GM12878 (cell line): ENCODE measurements at regions of chr1 and their contacts with region 1.

Region 1: DNA sequence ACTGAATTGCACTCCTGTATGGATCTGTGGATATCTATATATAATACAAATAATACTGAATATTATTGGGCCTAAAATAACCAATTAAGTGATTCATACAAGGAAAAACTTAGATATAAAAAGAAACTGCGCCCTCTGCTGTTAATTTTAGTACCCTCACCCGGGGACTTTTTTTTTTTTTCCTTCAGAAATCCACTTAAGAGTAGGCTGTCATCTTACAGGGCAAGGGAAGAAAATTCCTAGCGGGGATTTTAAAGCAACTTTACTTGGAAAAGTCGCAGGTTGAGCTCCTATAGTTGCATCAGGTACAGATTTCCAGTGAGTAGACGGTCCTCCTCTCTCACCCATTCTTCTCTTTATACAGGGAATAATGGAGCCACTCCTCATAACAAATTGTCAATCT is 1.3 kb downstream of the NTNG1 start:
- DNase-seq: no peak
- ATAC-seq: peak; percentile 47
- H3K4me3 ChIP-seq: peak overlapping the region; percentile 55; the same call in 1 of the 2 replicates
- H3K27ac ChIP-seq: no peak overlapping the region
- H3K4me1 ChIP-seq: no peaks in the 10 kb centered on the region
- H3K27me3 ChIP-seq: peaks cover 3 to 6% of the 10 kb centered on the region in 2 experiments; a peak in 3 of 4 replicates
- CTCF ChIP-seq: peak; percentile 45 to 50 (median 49); a peak in 5 of 6 replicates
- EP300 ChIP-seq: no peak
- POLR2A ChIP-seq: no peak
- RAD21 ChIP-seq: peak; percentile 62

Region 2: GRCh38 chr1:106022312-106022902 is 1119.7 kb before region 1 on chr1:
- CTCF ChIA-PET with region 1: no interaction called
- POLR2A ChIA-PET with region 1: no interaction called
- RAD21 ChIA-PET with region 1: no interaction called
- SMC1A ChIA-PET with region 1: no interaction called
- in situ Hi-C with region 1: loop called (anchors 5 kb)
- intact Hi-C with region 1: no loop called
- DNase-seq: no peak
- ATAC-seq: 0 out of 3 replicates have a peak, but pooled peaks have one; percentile 30
- H3K4me3 ChIP-seq: no peak overlapping the region
- H3K27ac ChIP-seq: no peak overlapping the region
- H3K4me1 ChIP-seq: no peaks in the 10 kb centered on the region
- H3K27me3 ChIP-seq: no peaks in the 10 kb centered on the region
- CTCF ChIP-seq: peak in 1 of 3 experiments; percentile 16; a peak in 2 of 6 replicates
- EP300 ChIP-seq: no peak
- POLR2A ChIP-seq: no peak
- RAD21 ChIP-seq: 0 out of 2 replicates have a peak, but pooled peaks have one; percentile 13

Region 3: GRCh38 chr1:106957783-106958182 is 184.4 kb before region 1 on chr1:
- CTCF ChIA-PET with region 1: interaction called, 11 read pairs
- POLR2A ChIA-PET with region 1: no interaction called
- RAD21 ChIA-PET with region 1: interaction called, 4 read pairs
- SMC1A ChIA-PET with region 1: interaction called, 4 read pairs
- in situ Hi-C with region 1: no loop called
- intact Hi-C with region 1: loop called (anchors 1 kb)
- DNase-seq: no peak
- ATAC-seq: no peak
- H3K4me3 ChIP-seq: no peak overlapping the region
- H3K27ac ChIP-seq: no peak overlapping the region
- H3K4me1 ChIP-seq: no peaks in the 10 kb centered on the region
- H3K27me3 ChIP-seq: no peaks in the 10 kb centered on the region; a peak in 1 of 4 replicates
- CTCF ChIP-seq: peak; percentile 16 to 27 (median 18); a peak in 4 of 6 replicates
- EP300 ChIP-seq: no peak
- POLR2A ChIP-seq: no peak
- RAD21 ChIP-seq: peak; percentile 48

Region 4: DNA sequence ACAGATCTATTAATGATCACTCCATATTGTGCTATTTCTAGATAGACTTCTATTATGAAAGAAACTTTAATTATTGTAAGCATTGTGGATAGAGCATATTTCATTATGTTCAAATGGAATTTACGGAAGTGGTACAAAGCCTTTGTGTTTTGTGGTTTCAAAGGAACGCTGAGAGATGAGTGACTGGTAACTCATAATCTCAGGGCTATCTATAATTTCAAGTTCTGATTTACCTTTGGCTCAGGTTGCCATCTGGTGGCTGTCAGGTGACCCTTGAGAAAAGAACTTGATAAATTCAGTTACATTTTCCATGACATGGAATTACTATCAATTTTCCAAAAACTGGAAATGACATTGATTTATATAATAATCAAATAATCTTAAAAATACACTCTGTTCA is 10.9 kb after region 1 on chr1:
- CTCF ChIA-PET with region 1: interaction called, 11 read pairs
- POLR2A ChIA-PET with region 1: no interaction called
- RAD21 ChIA-PET with region 1: no interaction called
- SMC1A ChIA-PET with region 1: interaction called, 4 read pairs
- in situ Hi-C with region 1: no loop called
- intact Hi-C with region 1: no loop called
- DNase-seq: no peak
- ATAC-seq: peak; percentile 38; the same call in 1 of the 3 replicates
- H3K4me3 ChIP-seq: no peak overlapping the region
- H3K27ac ChIP-seq: no peak overlapping the region
- H3K4me1 ChIP-seq: no peaks in the 10 kb centered on the region
- H3K27me3 ChIP-seq: no peaks in the 10 kb centered on the region
- CTCF ChIP-seq: peak; percentile 12 to 30 (median 16); a peak in 2 of 6 replicates
- EP300 ChIP-seq: no peak
- POLR2A ChIP-seq: no peak
- RAD21 ChIP-seq: peak; percentile 54